SK-N-SH (cell line): ENCODE measurements at regions of chr14 and their contacts with region 1.

Region 1: GRCh38 chr14:24195191-24196070 is at the start of gene TM9SF1:
- DNase-seq: peak; percentile 94
- H3K4me3 ChIP-seq: peak within 1 kb of the TSS; percentile 84 to 85
- H3K27ac ChIP-seq: peak within 1 kb of the TSS; percentile 88 to 89
- H3K4me1 ChIP-seq: peaks cover 11% of the 10 kb centered on the region in 2 experiments; a peak in 2 of 4 replicates
- H3K27me3 ChIP-seq: no peaks in the 10 kb centered on the region
- CTCF ChIP-seq: no peak
- EP300 ChIP-seq: peak in 1 of 2 experiments; percentile 7; a peak in 1 of 4 replicates
- RAD21 ChIP-seq: no peak
- polyA plus RNA-seq, gene TM9SF1: 48.7 and 54.8 TPM in 2 replicates

Region 2: DNA sequence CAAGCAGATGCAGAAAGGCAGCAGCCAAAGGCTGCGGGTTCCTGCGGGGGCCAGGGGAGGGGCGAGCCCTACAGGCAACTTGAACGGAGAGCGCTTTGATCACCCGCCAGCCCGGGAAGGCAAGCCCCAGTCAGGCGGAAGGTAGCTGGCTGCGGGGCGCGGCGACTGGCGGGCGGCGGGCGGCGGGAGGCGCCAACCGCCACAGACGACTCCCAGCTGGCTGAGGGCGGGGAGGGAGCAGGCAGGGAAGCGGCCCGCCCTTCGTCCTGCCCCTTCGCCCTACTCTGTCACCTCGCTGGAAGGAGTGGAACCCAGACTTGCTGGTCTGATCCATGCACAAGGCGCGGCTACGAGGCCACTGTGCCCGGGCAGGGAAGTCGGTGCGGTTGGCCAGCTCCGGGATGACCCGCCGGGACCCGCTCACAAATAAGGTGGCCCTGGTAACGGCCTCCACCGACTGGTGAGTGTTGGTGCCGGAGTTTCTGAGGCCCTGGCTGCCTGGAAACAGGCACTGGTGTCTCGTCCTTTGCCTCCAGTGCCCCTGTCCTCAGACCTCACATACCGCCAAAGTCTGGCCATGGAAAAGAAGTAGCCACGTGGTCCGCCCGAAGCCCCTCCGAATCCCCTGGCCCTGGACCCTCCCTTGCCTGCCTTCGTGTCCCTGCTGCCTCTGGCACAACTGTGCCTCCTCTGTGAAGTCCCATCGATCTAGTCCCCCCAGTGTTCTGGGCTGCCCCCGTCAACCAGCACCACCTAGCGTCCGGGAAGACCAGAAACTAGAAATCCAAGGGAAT is 159.1 kb before region 1 on chr14:
- CTCF ChIA-PET with region 1: no interaction called
- POLR2A ChIA-PET with region 1: no interaction called
- DNase-seq: peak; percentile 84
- H3K4me3 ChIP-seq: peak overlapping the region; percentile 61 to 66
- H3K27ac ChIP-seq: peak overlapping the region; percentile 29 to 79; a peak in 3 of 4 replicates
- H3K4me1 ChIP-seq: peaks cover 0 to 5% of the 10 kb centered on the region in 2 experiments; a peak in 1 of 4 replicates
- H3K27me3 ChIP-seq: no peaks in the 10 kb centered on the region
- CTCF ChIP-seq: peak; percentile 83
- EP300 ChIP-seq: no peak
- RAD21 ChIP-seq: peak; percentile 58

Region 3: GRCh38 chr14:24179961-24180796 is 15.3 kb before region 1 on chr14:
- CTCF ChIA-PET with region 1: interaction called, 3 read pairs
- POLR2A ChIA-PET with region 1: interaction called, 14 read pairs
- DNase-seq: no peak
- H3K4me3 ChIP-seq: no peak overlapping the region
- H3K27ac ChIP-seq: peak overlapping the region; percentile 8 to 16; a peak in 2 of 4 replicates
- H3K4me1 ChIP-seq: peaks cover 0 to 12% of the 10 kb centered on the region in 2 experiments; a peak in 2 of 4 replicates
- H3K27me3 ChIP-seq: no peaks in the 10 kb centered on the region
- CTCF ChIP-seq: no peak
- EP300 ChIP-seq: no peak
- RAD21 ChIP-seq: no peak